H1 (cell line): ENCODE measurements at regions of chr5 and their contacts with region 1.

Region 1: DNA sequence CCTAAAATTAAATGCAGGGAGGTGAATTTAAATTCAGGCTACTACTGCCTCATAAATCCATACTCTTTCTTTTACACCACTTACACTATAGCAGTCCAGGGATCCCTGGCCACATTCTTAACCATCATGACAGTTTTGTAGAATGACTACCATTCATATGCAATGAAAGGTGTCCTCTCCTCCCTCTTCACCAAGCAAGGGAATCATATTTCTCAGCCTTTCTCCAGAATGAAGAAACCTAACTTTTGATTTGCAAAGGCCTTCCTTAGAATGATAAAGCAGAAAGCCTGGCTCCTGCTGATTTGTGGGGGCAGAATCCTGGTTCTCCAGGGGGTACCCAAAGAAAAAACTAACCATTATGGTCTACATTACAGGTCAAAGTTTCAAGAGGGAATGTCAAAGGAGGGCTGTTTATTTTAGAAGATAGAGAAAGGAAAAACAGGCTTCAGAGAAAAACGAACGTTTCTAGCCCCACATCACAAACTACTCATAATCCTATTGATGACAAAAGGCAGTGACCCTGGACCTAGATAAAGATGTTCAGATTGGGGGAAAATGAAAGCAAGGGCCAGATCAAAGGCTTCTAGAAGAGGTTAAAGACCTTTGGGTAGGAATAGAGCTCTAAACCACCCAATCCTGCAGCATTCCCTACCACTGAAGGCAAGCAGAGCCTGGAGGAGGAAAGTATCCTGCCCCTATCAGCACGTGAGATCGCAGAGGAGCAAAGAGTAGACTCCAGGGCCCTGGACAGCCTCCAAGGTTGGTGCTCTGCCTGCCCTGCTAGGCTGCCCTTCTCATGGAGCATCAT is 11.5 kb downstream of the WNT8A start:
- DNase-seq: peak in 1 of 2 experiments; percentile 55
- H3K4me3 ChIP-seq: peak overlapping the region in 1 of 4 experiments; percentile 48; a peak in 3 of 8 replicates
- H3K27ac ChIP-seq: no peak overlapping the region
- H3K4me1 ChIP-seq: peaks cover 13 to 27% (median 26%) of the 10 kb centered on the region in 4 experiments
- H3K27me3 ChIP-seq: peaks cover 46 to 74% (median 65%) of the 10 kb centered on the region in 4 experiments
- CTCF ChIP-seq: no peak
- EP300 ChIP-seq: peak in 1 of 2 experiments; percentile 66; a peak in 1 of 3 replicates
- POLR2A ChIP-seq: no peak
- RAD21 ChIP-seq: no peak

Region 2: GRCh38 chr5:138128334-138128733 is 33.0 kb after region 1 on chr5:
- CTCF ChIA-PET with region 1: interaction called, 28 read pairs
- POLR2A ChIA-PET with region 1: no interaction called
- DNase-seq: no peak
- H3K4me3 ChIP-seq: no peak overlapping the region
- H3K27ac ChIP-seq: no peak overlapping the region
- H3K4me1 ChIP-seq: no peaks in the 10 kb centered on the region; a peak in 1 of 7 replicates
- H3K27me3 ChIP-seq: no peaks in the 10 kb centered on the region
- CTCF ChIP-seq: no peak
- EP300 ChIP-seq: no peak
- POLR2A ChIP-seq: no peak
- RAD21 ChIP-seq: no peak